Right ventricle myocardium superior (tissue), 1 donor: ENCODE measurements at regions of chr11 and their contacts with region 1.

Region 1: DNA sequence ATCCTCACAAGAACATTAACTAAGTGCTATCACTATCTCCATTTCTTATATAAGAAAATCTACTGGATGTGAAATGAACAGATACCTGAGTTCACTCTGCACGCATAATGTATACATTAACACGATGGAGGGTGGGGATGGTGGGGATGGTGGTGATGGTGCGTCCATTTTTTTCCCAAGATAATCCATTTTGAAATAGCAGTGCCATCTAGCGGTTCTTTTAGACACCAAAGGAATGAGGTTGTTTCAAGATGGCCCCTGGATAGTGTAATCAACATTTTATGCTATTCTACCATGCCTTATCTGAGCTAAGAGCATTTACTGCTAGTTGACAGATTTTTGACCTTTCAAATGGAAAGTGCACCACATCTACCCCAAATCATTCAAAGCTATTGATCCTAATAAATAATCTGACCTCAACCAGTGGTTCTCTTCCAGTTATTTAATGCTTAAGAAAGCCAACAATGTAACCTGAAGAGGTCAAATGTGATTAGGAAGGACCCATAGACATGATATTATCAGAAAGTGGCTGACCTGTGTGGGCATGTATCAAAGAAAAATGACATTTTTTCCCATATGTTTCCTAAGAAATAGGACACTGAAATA is 714.7 kb upstream of the TENM4 start:
- DNase-seq: no peak
- ATAC-seq: no peak

Region 2: GRCh38 chr11:79762279-79762921 is 393.1 kb before region 1 on chr11:
- intact Hi-C with region 1: loop called (anchors 10 kb)
- DNase-seq: no peak
- ATAC-seq: peak; percentile 56